IMR-90 (cell line): ENCODE measurements at regions of chr7 and their contacts with region 1.

Region 1: GRCh38 chr7:68929781-68930261 is 668.5 kb upstream of the AUTS2 start:
- DNase-seq: peak; percentile 2
- ATAC-seq: no peak
- H3K4me3 ChIP-seq: no peak overlapping the region
- H3K27ac ChIP-seq: no peak overlapping the region
- H3K4me1 ChIP-seq: no peaks in the 10 kb centered on the region
- H3K27me3 ChIP-seq: no peaks in the 10 kb centered on the region
- CTCF ChIP-seq: no peak
- POLR2A ChIP-seq: no peak
- RAD21 ChIP-seq: no peak

Region 2: DNA sequence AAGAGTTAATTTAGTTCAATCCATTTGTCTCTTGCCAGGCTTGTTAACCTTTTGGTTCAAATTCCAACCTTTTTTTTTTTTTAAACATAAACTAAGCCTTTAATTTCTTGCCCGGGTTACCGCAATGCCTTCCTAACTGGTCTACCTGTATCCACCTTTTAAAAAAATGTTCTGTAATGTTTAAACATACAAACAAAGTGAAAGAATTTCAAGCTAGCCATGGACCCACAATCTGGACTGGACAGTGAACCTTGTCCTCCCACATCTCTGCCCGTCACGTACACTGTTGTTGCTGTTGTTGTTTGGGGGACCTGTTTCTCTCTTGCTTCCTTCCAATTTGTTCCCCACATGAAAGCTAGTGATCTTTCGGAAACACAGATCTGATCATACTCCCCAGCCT is 56.2 kb before region 1 on chr7:
- CTCF ChIA-PET with region 1: no interaction called
- POLR2A ChIA-PET with region 1: no interaction called
- dilution Hi-C with region 1: no loop called
- in situ Hi-C with region 1: no loop called
- intact Hi-C with region 1: no loop called
- DNase-seq: no peak
- ATAC-seq: no peak
- H3K4me3 ChIP-seq: no peak overlapping the region
- H3K27ac ChIP-seq: no peak overlapping the region
- H3K4me1 ChIP-seq: no peaks in the 10 kb centered on the region
- H3K27me3 ChIP-seq: no peaks in the 10 kb centered on the region
- CTCF ChIP-seq: no peak
- POLR2A ChIP-seq: no peak
- RAD21 ChIP-seq: no peak

Region 3: GRCh38 chr7:69070361-69070875 is 140.6 kb after region 1 on chr7:
- CTCF ChIA-PET with region 1: no interaction called
- POLR2A ChIA-PET with region 1: no interaction called
- dilution Hi-C with region 1: no loop called
- in situ Hi-C with region 1: no loop called
- intact Hi-C with region 1: no loop called
- DNase-seq: no peak
- ATAC-seq: no peak
- H3K4me3 ChIP-seq: no peak overlapping the region
- H3K27ac ChIP-seq: no peak overlapping the region
- H3K4me1 ChIP-seq: no peaks in the 10 kb centered on the region
- H3K27me3 ChIP-seq: no peaks in the 10 kb centered on the region
- CTCF ChIP-seq: no peak
- POLR2A ChIP-seq: no peak
- RAD21 ChIP-seq: no peak

Region 4: GRCh38 chr7:69377191-69377590 is 447.4 kb after region 1 on chr7:
- CTCF ChIA-PET with region 1: no interaction called
- POLR2A ChIA-PET with region 1: no interaction called
- dilution Hi-C with region 1: no loop called
- in situ Hi-C with region 1: no loop called
- intact Hi-C with region 1: no loop called
- DNase-seq: no peak
- ATAC-seq: no peak
- H3K4me3 ChIP-seq: no peak overlapping the region
- H3K27ac ChIP-seq: no peak overlapping the region
- H3K4me1 ChIP-seq: no peaks in the 10 kb centered on the region
- H3K27me3 ChIP-seq: no peaks in the 10 kb centered on the region
- CTCF ChIP-seq: no peak
- POLR2A ChIP-seq: no peak
- RAD21 ChIP-seq: no peak

Region 5: DNA sequence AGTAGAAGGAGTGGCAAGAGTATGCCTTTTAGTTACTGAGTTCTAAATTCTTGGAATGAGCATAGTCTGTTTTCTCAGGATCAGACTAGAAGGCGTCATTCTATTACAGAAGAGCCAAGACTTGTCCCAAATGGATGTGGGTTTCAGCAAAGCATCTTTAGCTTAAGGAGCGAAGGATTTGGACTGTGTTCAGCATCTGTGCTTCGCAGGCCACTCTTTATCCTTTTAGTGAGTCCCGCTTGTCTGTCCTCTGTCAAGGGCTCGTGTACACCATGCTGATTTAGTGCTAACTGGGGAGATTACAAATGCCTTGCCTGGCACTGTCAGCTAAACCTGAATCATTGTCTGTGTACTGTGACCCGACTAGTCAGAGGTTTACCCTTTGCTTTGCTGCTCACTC is 1134.1 kb after region 1 on chr7:
- CTCF ChIA-PET with region 1: interaction called, 11 read pairs
- POLR2A ChIA-PET with region 1: no interaction called
- dilution Hi-C with region 1: no loop called
- in situ Hi-C with region 1: no loop called
- intact Hi-C with region 1: no loop called
- DNase-seq: no peak
- ATAC-seq: no peak
- H3K4me3 ChIP-seq: no peak overlapping the region
- H3K27ac ChIP-seq: no peak overlapping the region
- H3K4me1 ChIP-seq: no peaks in the 10 kb centered on the region
- H3K27me3 ChIP-seq: no peaks in the 10 kb centered on the region
- CTCF ChIP-seq: no peak
- POLR2A ChIP-seq: no peak
- RAD21 ChIP-seq: no peak